ENCODE measurements at regions of chr12 and their contacts with region 1.

Region 1: GRCh38 chr12:55996715-55997534 is at the start of gene SUOX:
- DNase-seq: peak; percentile 98
- ATAC-seq: peak; percentile 98
- H3K4me3 ChIP-seq: peak within 1 kb of the TSS; percentile 84 to 88 (median 84)
- H3K27ac ChIP-seq: peak within 1 kb of the TSS; percentile 92
- H3K4me1 ChIP-seq: peaks cover 50% of the 10 kb centered on the region
- H3K27me3 ChIP-seq: peaks cover 0 to 3% of the 10 kb centered on the region in 2 experiments; a peak in 1 of 5 replicates
- CTCF ChIP-seq: peak; percentile 20
- EP300 ChIP-seq: no peak
- POLR2A ChIP-seq: peak; percentile 75 to 86
- RAD21 ChIP-seq: no peak; the same call in 1 of the 2 replicates
- total RNA-seq, gene SUOX: 23.9 and 24.6 TPM in 2 replicates

Region 2: GRCh38 chr12:56014206-56014605 is 17.3 kb after region 1 on chr12:
- CTCF ChIA-PET with region 1: no interaction called
- POLR2A ChIA-PET with region 1: interaction called, 16 read pairs
- in situ Hi-C with region 1: no loop called
- intact Hi-C with region 1: loop called (anchors 2 kb)
- DNase-seq: no peak
- ATAC-seq: no peak
- H3K4me3 ChIP-seq: no peak overlapping the region
- H3K27ac ChIP-seq: peak overlapping the region; percentile 68
- H3K4me1 ChIP-seq: peaks cover 71% of the 10 kb centered on the region
- H3K27me3 ChIP-seq: no peaks in the 10 kb centered on the region
- CTCF ChIP-seq: no peak
- EP300 ChIP-seq: no peak
- POLR2A ChIP-seq: no peak
- RAD21 ChIP-seq: no peak

Region 3: GRCh38 chr12:56029666-56030293 is 32.9 kb after region 1 on chr12:
- CTCF ChIA-PET with region 1: interaction called, 79 read pairs
- POLR2A ChIA-PET with region 1: interaction called, 35 read pairs
- in situ Hi-C with region 1: loop called (anchors 5 kb)
- intact Hi-C with region 1: loop called (anchors 1 kb)
- DNase-seq: peak; percentile 71
- ATAC-seq: peak; percentile 94
- H3K4me3 ChIP-seq: no peak overlapping the region
- H3K27ac ChIP-seq: no peak overlapping the region
- H3K4me1 ChIP-seq: peaks cover 13% of the 10 kb centered on the region
- H3K27me3 ChIP-seq: no peaks in the 10 kb centered on the region
- CTCF ChIP-seq: peak; percentile 82
- EP300 ChIP-seq: no peak
- POLR2A ChIP-seq: no peak
- RAD21 ChIP-seq: peak; percentile 77

Region 4: GRCh38 chr12:56078990-56079664 is 82.2 kb after region 1 on chr12:
- CTCF ChIA-PET with region 1: no interaction called
- POLR2A ChIA-PET with region 1: interaction called, 18 read pairs
- in situ Hi-C with region 1: no loop called
- intact Hi-C with region 1: loop called (anchors 2 kb)
- DNase-seq: peak; percentile 81
- ATAC-seq: peak; percentile 61
- H3K4me3 ChIP-seq: peak overlapping the region; percentile 89 to 96 (median 91)
- H3K27ac ChIP-seq: peak overlapping the region; percentile 99
- H3K4me1 ChIP-seq: peaks cover 49% of the 10 kb centered on the region
- H3K27me3 ChIP-seq: no peaks in the 10 kb centered on the region; a peak in 1 of 5 replicates
- CTCF ChIP-seq: peak; percentile 83
- EP300 ChIP-seq: 0 out of 4 replicates have a peak, but pooled peaks of 1 of the 2 experiments have one; percentile 22
- POLR2A ChIP-seq: peak; percentile 67 to 73; a peak in 3 of 4 replicates
- RAD21 ChIP-seq: peak; percentile 80